A549 (cell line): ENCODE measurements at regions of chr6 and their contacts with region 1.

Region 1: GRCh38 chr6:3977875-3978711 is 100.8 kb downstream of the FAM217A start:
- DNase-seq: peak; percentile 34 to 86
- ATAC-seq: peak; percentile 97 to 99
- H3K4me3 ChIP-seq: no peak overlapping the region
- H3K27ac ChIP-seq: no peak overlapping the region
- H3K4me1 ChIP-seq: peaks cover 9% of the 10 kb centered on the region; the same call in 2 of the 3 replicates
- CTCF ChIP-seq: peak; percentile 73
- EP300 ChIP-seq: no peak
- POLR2A ChIP-seq: no peak
- RAD21 ChIP-seq: peak; percentile 69 to 76

Region 2: GRCh38 chr6:3742426-3743344 is 235.4 kb before region 1 on chr6:
- CTCF ChIA-PET with region 1: interaction called, 96 read pairs
- POLR2A ChIA-PET with region 1: no interaction called
- DNase-seq: peak; percentile 47 to 73
- ATAC-seq: peak; percentile 80 to 87
- H3K4me3 ChIP-seq: no peak overlapping the region
- H3K27ac ChIP-seq: peak overlapping the region; percentile 59 to 74; a peak in 5 of 6 replicates
- H3K4me1 ChIP-seq: peaks cover 20% of the 10 kb centered on the region
- CTCF ChIP-seq: peak; percentile 78
- EP300 ChIP-seq: no peak
- POLR2A ChIP-seq: no peak
- RAD21 ChIP-seq: peak; percentile 94

Region 3: DNA sequence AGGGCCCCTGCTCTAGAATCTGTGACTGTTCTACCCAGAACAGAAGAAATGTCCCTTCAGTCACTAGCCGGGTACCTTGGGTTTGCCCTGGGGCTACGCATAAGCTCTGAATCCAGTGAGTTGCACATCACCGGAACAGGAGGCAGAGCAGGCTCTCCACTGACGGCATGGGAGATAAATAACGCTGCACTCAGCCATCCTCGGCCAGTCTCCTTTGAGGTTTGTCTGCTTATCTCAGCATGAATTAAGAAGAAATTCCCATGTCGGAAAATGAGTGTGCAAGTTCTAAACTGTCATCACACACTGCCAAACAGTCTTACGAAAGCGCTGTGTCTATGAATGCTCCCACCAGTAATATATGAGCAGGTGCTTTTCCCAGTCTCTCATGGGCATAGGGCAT is 38.1 kb before region 1 on chr6:
- CTCF ChIA-PET with region 1: interaction called, 22 read pairs
- POLR2A ChIA-PET with region 1: no interaction called
- DNase-seq: no peak
- ATAC-seq: no peak
- H3K4me3 ChIP-seq: no peak overlapping the region
- H3K27ac ChIP-seq: no peak overlapping the region
- H3K4me1 ChIP-seq: peaks cover 1% of the 10 kb centered on the region
- CTCF ChIP-seq: no peak
- EP300 ChIP-seq: no peak
- POLR2A ChIP-seq: no peak
- RAD21 ChIP-seq: no peak

Region 4: GRCh38 chr6:3962957-3963303 is 15.2 kb before region 1 on chr6:
- CTCF ChIA-PET with region 1: interaction called, 14 read pairs
- POLR2A ChIA-PET with region 1: no interaction called
- DNase-seq: peak in 1 of 2 experiments; percentile 49
- ATAC-seq: no peak
- H3K4me3 ChIP-seq: no peak overlapping the region
- H3K27ac ChIP-seq: no peak overlapping the region
- H3K4me1 ChIP-seq: peaks cover 8% of the 10 kb centered on the region; the same call in 2 of the 3 replicates
- CTCF ChIP-seq: no peak
- EP300 ChIP-seq: no peak
- POLR2A ChIP-seq: no peak
- RAD21 ChIP-seq: no peak

Region 5: DNA sequence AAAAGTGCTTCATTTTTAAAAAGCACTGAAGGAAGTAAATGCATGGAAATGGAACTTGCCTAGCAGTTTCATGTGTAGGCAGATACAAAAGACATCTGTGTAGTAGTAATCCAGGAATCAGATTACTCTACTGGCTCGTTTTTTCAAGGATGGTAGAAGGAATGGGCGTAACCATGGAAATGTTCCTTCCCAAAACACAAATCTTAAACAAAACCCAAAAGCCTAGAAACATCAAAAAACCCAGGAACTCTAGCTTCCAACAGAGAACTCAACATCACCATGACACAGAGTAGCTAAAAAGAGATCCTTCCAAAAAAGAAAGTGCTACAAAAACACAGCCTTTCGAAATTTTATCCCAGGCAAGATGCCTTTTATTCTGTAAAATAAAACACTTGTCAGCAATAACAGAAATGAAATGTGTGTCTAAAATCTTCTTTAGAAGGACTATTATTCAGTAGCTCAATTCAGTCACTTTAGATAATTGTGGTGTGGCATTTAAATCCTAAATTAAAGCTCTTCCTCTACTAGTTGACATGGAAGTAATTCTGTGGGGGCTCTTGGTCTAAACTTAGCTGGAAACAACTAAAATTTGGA is 19.2 kb after region 1 on chr6:
- CTCF ChIA-PET with region 1: interaction called, 15 read pairs
- POLR2A ChIA-PET with region 1: no interaction called
- DNase-seq: no peak
- ATAC-seq: no peak
- H3K4me3 ChIP-seq: no peak overlapping the region
- H3K27ac ChIP-seq: no peak overlapping the region
- H3K4me1 ChIP-seq: no peaks in the 10 kb centered on the region
- CTCF ChIP-seq: no peak
- EP300 ChIP-seq: no peak
- POLR2A ChIP-seq: no peak
- RAD21 ChIP-seq: no peak